Prostate gland (tissue), 2 donors: ENCODE measurements at regions of chr4 and their contacts with region 1.

Region 1: DNA sequence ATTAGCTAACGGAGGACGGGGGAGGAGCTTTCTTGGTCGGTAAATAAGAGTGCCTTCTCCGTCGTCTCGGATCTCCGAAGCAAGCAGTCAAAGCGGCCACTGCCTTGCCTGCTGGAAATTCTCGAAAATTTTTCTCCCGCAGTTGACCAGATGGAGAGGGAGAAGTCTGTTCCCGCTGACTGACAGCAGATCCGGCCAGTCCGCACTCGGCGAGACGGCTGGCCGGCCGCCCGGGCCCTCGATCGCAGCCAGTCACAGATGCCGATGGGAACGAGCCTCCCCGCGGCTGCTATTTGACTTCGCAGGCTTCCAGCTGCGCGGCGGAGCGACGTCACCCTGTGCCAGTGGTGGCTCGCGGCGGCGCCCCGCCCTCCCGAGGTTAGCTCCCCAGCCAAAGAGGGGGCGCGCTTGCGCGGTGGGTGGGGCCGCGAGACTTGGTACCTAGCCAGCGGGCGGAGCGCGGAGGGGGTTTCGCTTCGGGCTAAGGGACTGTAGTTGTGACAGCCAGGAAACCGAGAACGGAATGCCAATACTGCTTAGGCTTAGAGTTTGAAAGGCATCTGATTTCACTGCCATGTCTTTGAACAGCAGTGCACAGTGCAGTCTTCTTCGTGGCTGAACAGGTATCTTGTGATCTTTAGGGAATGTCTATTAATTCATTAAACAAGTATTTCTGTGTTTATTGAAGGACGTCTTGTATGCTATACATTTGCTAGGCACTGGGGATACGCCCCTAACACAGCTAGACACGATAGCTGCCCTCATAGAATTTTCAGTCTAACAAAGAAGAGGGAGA is at the start of gene PPM1K:
- DNase-seq: peak; percentile 100
- H3K4me3 ChIP-seq: peak within 1 kb of the TSS; percentile 80 to 92
- H3K27ac ChIP-seq: peak within 1 kb of the TSS; percentile 99
- H3K4me1 ChIP-seq: no peaks in the 10 kb centered on the region
- H3K27me3 ChIP-seq: no peaks in the 10 kb centered on the region
- CTCF ChIP-seq: peak in 2 of 4 experiments; percentile 42 to 44
- POLR2A ChIP-seq: peak; percentile 85
- total RNA-seq, gene PPM1K: 63.7 to 65.1 TPM

Region 2: DNA sequence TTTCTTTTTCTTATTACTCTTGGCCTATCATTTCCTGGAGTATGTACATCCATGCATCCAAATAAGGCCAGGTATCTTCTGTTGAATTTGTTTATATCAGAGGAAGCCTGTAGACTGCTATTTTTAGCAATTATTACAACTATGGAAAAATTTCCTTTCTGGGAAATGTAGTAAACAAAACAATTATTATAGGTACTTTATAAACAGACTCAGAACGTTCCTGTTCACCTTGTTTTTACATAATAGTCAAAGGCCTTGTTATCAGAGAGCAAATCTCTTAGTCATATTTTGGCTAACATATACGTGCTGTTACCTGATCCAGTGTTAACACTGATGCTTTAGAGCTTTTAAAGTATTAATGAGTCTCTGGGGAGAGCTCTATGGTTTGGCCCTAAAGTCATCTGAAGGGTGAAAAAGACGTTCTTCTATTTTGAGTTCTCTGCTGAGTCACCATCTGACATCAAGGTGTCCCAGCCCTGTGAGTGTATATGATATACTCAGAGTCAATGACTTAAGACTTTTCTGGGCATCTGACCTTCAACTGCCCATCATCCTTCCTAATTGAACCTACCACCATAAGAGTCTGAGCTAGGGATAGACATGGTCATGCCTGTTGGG is 762.8 kb before region 1 on chr4:
- intact Hi-C with region 1: loop called (anchors 10 kb)
- DNase-seq: peak; percentile 64
- H3K4me3 ChIP-seq: no peak overlapping the region
- H3K27ac ChIP-seq: peak overlapping the region; percentile 88
- H3K4me1 ChIP-seq: no peaks in the 10 kb centered on the region
- H3K27me3 ChIP-seq: no peaks in the 10 kb centered on the region
- CTCF ChIP-seq: no peak
- POLR2A ChIP-seq: no peak

Region 3: DNA sequence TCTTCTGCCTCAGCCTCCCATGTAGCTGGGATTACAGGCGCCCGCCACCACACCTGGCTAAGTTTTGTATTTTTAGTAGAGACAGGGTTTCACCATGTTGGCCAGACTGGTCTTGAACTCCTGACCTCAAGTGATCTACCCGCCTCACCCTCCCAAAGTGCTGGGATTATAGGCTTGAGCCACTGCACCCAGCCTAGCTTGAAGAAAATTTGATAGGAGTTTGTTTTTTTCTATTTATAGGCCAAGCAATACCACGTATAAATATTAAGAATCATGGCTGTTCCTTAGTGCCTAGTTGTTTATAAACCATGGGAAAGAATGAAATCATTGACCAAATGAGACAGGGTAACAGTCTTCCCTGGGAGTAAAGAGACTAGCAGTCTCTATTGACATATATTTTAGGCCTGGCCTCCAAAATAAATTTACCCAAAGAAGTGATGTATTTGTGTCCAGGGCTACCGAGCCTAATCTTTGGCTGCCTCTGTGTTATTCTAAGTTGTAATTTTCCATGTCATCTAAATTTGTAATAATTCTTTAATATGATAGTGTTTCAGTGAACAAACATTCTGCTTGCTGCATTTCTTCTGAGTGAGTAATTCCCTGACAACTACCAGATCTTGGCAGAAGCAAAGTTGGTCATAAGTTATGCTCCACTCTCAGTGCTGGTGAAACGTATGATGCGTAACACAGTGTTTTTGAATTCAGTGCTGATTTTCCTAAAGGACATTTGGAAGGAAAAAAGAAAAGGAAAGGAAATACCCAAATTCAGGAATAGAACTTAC is 266.9 kb before region 1 on chr4:
- intact Hi-C with region 1: loop called (anchors 10 kb)
- DNase-seq: no peak
- H3K4me3 ChIP-seq: no peak overlapping the region
- H3K27ac ChIP-seq: peak overlapping the region; percentile 42 to 64
- H3K4me1 ChIP-seq: no peaks in the 10 kb centered on the region
- H3K27me3 ChIP-seq: no peaks in the 10 kb centered on the region
- CTCF ChIP-seq: no peak
- POLR2A ChIP-seq: no peak

Region 4: GRCh38 chr4:88366460-88366859 is 81.8 kb after region 1 on chr4:
- intact Hi-C with region 1: no loop called
- DNase-seq: no peak
- H3K4me3 ChIP-seq: no peak overlapping the region
- H3K27ac ChIP-seq: no peak overlapping the region
- H3K4me1 ChIP-seq: no peaks in the 10 kb centered on the region
- H3K27me3 ChIP-seq: no peaks in the 10 kb centered on the region
- CTCF ChIP-seq: no peak
- POLR2A ChIP-seq: no peak

Region 5: DNA sequence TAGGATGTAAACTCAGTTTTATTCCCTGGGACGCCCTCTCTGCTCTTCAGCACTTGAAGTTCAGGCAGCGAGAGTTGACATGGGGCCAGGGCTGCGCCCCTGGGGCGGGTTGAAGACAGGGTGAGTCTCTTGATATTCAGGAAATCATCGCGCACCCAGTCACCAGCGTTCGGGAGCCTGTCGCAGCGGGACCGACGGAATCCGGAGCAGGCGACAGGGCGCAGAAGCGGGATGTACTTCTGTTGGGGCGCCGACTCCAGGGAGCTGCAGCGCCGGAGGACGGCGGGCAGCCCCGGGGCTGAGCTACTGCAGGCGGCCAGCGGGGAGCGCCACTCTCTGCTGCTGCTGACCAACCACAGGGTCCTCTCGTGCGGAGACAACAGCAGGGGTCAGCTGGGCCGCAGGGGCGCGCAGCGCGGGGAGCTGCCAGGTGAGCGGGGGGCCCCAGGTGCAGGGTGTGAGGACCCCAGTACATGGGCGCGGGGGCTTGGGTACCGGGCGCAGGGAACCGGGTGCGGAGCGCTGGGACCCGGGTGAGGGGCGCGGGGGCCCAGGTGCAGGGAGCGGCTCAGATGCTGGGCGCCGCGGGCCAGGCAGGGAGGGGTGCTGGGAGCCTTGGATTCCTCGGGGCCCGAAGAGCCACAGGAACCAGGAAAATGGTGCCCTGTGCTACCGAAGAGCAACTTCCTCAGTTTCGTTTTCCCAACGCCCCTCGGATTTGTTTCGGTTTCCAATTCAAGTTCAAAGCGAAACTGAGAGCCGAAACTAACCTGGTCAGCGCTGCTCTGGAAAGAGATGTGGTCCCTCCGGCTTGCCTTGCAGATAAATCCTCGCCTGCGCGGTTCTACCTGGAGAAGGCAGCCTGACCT is 94.3 kb after region 1 on chr4 and contains the start of gene HERC6:
- intact Hi-C with region 1: loop called (anchors 5 kb)
- DNase-seq: peak; percentile 79
- H3K4me3 ChIP-seq: peak within 1 kb of the TSS; percentile 97 to 99
- H3K27ac ChIP-seq: peak within 1 kb of the TSS; percentile 99
- H3K4me1 ChIP-seq: no peaks in the 10 kb centered on the region
- H3K27me3 ChIP-seq: no peaks in the 10 kb centered on the region
- CTCF ChIP-seq: peak; percentile 41 to 77 (median 62)
- POLR2A ChIP-seq: peak; percentile 26
- total RNA-seq, gene HERC6: 16.0 to 20.6 TPM

Region 6: DNA sequence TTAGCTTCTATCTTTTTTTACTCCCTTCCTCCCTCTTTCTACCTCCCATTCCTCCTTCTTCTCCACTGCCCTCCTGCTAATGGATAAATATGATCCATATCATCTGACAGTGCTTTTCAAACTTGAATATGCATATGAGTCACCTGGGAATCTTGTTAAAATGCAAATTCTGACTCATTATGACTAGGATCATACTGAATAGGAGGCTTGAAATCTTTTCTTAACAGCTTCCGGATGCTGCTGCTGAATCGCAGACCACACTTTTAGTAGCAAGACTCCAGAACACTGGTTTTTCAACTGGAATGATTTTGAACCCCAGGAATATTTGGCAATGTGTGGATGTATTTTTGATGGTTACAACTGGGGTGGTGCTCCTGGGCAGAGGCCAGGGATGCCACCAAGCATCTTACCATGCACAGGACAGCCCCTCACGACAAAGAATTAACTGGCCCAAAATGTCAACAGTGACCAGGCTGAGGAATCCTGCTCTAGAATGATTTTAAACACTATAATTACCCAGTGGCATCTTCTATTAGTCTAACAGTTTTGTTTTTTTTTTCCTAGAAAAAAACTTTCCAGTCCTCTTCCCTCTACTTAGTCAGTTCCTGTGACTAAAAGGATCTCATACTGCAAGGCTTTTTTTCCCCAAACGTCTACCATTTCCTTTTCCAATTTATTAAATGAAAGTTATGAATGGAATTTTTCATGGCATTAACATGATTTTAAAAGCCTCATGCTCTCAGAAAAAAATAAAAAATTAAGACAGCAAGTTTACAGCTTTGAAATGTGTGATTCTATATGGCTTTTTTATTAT is 249.5 kb after region 1 on chr4:
- intact Hi-C with region 1: no loop called
- DNase-seq: no peak
- H3K4me3 ChIP-seq: no peak overlapping the region
- H3K27ac ChIP-seq: no peak overlapping the region
- H3K4me1 ChIP-seq: no peaks in the 10 kb centered on the region
- H3K27me3 ChIP-seq: no peaks in the 10 kb centered on the region
- CTCF ChIP-seq: no peak
- POLR2A ChIP-seq: no peak